ENCODE measurements at regions of chr4 and their contacts with region 1.

Region 1: DNA sequence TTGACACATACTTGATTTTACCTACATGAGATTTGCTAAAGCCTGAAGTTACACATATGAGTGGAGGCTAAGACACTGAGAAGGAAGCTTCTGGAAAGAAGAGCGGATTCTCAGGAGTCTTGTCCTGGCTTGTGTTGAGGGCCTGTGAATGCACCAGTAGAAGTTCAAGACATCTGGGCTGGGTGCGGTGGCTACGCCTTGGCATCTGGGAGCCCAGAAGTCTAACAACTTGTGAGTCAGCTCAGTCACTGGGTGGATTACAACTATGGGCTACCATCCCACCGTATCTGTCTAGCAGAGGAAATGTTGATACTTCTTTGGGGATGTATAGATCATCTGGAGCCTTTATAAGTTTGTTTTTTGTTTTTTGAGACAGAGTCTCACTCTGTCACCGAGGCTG is 375.6 kb upstream of the SMIM31 start:
- DNase-seq: no peak
- H3K4me3 Mint-ChIP-seq: no peak overlapping the region
- H3K27ac Mint-ChIP-seq: no peak overlapping the region
- H3K4me1 Mint-ChIP-seq: no peaks in the 10 kb centered on the region
- H3K27me3 Mint-ChIP-seq: peaks cover 25% of the 10 kb centered on the region

Region 2: GRCh38 chr4:163895378-163896005 is 482.9 kb before region 1 on chr4:
- CTCF ChIA-PET with region 1: no interaction called
- intact Hi-C with region 1: no loop called
- DNase-seq: peak; percentile 3
- H3K4me3 Mint-ChIP-seq: no peak overlapping the region
- H3K27ac Mint-ChIP-seq: no peak overlapping the region
- H3K4me1 Mint-ChIP-seq: peaks cover 12% of the 10 kb centered on the region
- H3K27me3 Mint-ChIP-seq: no peaks in the 10 kb centered on the region

Region 3: GRCh38 chr4:164761241-164761640 is 382.9 kb after region 1 on chr4:
- CTCF ChIA-PET with region 1: interaction called, 10 read pairs
- intact Hi-C with region 1: no loop called
- DNase-seq: no peak
- H3K4me3 Mint-ChIP-seq: no peak overlapping the region
- H3K27ac Mint-ChIP-seq: no peak overlapping the region
- H3K4me1 Mint-ChIP-seq: no peaks in the 10 kb centered on the region
- H3K27me3 Mint-ChIP-seq: peaks cover 21% of the 10 kb centered on the region